Activated B cell treated with CpG ODN at 0.5 μM for 24 hours (primary cell): ENCODE measurements at regions of chr12 and their contacts with region 1.

Region 1: GRCh38 chr12:22443379-22444316 is 100.7 kb downstream of the C2CD5 start:
- DNase-seq: no peak
- ATAC-seq: peak; percentile 100
- H3K4me3 Mint-ChIP-seq: no peak overlapping the region
- H3K27ac Mint-ChIP-seq: no peak overlapping the region
- H3K4me1 Mint-ChIP-seq: no peaks in the 10 kb centered on the region
- H3K27me3 Mint-ChIP-seq: no peaks in the 10 kb centered on the region
- CTCF ChIP-seq: peak; percentile 37

Region 2: GRCh38 chr12:20463913-20464524 is 1979.6 kb before region 1 on chr12:
- CTCF ChIA-PET with region 1: no interaction called
- POLR2A ChIA-PET with region 1: no interaction called
- intact Hi-C with region 1: loop called (anchors 5 kb)
- DNase-seq: no peak
- ATAC-seq: no peak
- H3K4me3 Mint-ChIP-seq: no peak overlapping the region
- H3K27ac Mint-ChIP-seq: no peak overlapping the region
- H3K4me1 Mint-ChIP-seq: no peaks in the 10 kb centered on the region
- H3K27me3 Mint-ChIP-seq: no peaks in the 10 kb centered on the region
- CTCF ChIP-seq: no peak

Region 3: GRCh38 chr12:21697904-21698630 is 745.6 kb before region 1 on chr12:
- CTCF ChIA-PET with region 1: interaction called, 24 read pairs
- POLR2A ChIA-PET with region 1: no interaction called
- intact Hi-C with region 1: loop called (anchors 1 kb)
- DNase-seq: no peak
- ATAC-seq: no peak
- H3K4me3 Mint-ChIP-seq: no peak overlapping the region
- H3K27ac Mint-ChIP-seq: no peak overlapping the region
- H3K4me1 Mint-ChIP-seq: no peaks in the 10 kb centered on the region
- H3K27me3 Mint-ChIP-seq: peaks cover under 1% of the 10 kb centered on the region
- CTCF ChIP-seq: no peak

Region 4: DNA sequence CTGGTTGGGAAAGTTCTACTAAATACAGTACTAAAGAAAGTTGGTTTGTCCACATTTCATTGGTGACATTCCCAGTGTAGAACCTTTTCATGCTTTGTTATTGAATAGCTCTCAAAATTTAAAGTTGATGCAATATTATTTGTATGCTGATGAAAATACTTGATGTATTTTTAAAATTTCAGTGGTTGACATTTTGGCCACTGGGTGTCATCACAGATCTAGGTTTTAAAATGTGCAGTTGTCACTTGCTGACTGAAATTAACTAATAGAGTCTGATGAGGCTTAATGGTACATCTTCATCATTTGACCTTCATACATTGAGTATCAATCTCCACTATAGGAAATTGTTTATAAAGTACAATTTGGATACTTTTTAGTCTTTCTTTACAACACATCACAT is 360.5 kb before region 1 on chr12:
- CTCF ChIA-PET with region 1: interaction called, 16 read pairs
- POLR2A ChIA-PET with region 1: no interaction called
- intact Hi-C with region 1: loop called (anchors 1 kb)
- DNase-seq: no peak
- ATAC-seq: peak; percentile 37
- H3K4me3 Mint-ChIP-seq: no peak overlapping the region
- H3K27ac Mint-ChIP-seq: no peak overlapping the region
- H3K4me1 Mint-ChIP-seq: no peaks in the 10 kb centered on the region
- H3K27me3 Mint-ChIP-seq: no peaks in the 10 kb centered on the region
- CTCF ChIP-seq: no peak

Region 5: GRCh38 chr12:22100958-22101748 is 342.5 kb before region 1 on chr12:
- CTCF ChIA-PET with region 1: interaction called, 17 read pairs
- POLR2A ChIA-PET with region 1: no interaction called
- intact Hi-C with region 1: loop called (anchors 1 kb)
- DNase-seq: no peak
- ATAC-seq: peak; percentile 52
- H3K4me3 Mint-ChIP-seq: no peak overlapping the region
- H3K27ac Mint-ChIP-seq: no peak overlapping the region
- H3K4me1 Mint-ChIP-seq: peaks cover 11% of the 10 kb centered on the region
- H3K27me3 Mint-ChIP-seq: peaks cover 8% of the 10 kb centered on the region
- CTCF ChIP-seq: no peak

Region 6: DNA sequence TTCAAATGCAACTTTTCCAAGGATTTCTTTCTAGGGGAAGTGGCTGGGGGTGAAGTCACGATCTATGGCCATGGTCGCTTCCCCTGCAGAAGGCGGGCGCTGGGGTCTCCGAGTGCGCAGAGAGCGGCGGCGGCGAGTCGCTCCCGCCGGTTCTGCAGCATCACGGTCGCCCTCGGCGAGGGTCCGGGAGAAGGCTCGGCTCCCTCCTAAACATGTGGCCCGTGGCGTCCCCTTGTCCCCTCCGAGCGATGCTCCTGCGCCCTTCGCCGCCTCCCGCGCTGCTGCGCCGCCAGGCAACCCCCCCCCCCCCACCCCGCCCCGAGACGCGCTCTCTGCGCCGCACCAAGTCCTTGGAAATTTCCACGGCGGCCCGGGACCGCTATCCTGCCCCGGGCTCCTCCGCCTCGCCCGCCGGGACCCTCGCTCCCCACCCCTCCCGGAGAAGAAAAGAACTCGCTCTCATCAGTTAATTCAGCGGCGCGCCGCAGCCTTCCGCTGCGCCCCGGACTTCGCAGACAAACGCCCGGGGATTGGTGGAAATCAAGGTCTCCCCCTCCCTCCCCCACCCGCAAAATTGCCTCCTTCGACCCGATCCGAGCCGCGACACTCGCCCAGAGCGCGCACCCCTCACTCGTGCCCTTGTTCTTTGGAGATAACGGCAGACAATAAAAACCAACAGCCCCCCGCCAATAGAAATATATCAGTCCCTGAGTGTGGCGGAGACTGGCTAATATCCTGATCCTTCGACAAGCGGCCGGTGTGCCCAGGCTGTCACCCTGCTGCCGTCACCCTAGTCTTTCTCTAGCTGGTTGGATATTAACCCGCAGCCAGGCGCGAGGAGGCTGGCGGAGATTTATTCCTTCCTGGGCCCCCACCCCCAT is 109.0 kb before region 1 on chr12 and contains the start of gene ST8SIA1:
- CTCF ChIA-PET with region 1: no interaction called
- POLR2A ChIA-PET with region 1: no interaction called
- intact Hi-C with region 1: loop called (anchors 2 kb)
- DNase-seq: no peak
- ATAC-seq: peak; percentile 19
- H3K4me3 Mint-ChIP-seq: peak within 1 kb of the TSS; percentile 82
- H3K27ac Mint-ChIP-seq: no peak within 1 kb of the TSS
- H3K4me1 Mint-ChIP-seq: peaks cover 22% of the 10 kb centered on the region
- H3K27me3 Mint-ChIP-seq: peaks cover 58% of the 10 kb centered on the region
- CTCF ChIP-seq: no peak
- total RNA-seq, gene ST8SIA1: 0.31 TPM in 1 of 2 replicates, not detected in the other

Region 7: DNA sequence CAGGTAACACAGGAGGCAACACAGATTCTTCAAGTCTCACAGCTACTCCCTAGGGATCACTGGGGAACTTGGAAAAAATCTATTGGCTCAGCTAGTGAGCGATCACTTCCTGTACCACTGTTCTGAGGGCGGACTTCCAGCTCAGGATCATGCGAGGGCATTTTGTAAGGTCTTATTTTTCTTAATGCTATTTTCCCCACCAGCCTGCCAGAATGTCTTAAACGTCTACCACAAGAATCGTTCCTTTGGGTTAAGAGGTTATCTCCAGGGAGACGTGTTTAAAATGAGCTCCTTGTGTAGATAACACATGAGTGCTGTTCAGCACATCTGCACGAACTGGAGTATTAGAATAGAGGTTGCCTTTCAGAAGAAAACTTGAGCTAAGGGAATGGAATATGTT is 343.9 kb after region 1 on chr12:
- CTCF ChIA-PET with region 1: no interaction called
- POLR2A ChIA-PET with region 1: no interaction called
- intact Hi-C with region 1: no loop called
- DNase-seq: no peak
- ATAC-seq: no peak
- H3K4me3 Mint-ChIP-seq: no peak overlapping the region
- H3K27ac Mint-ChIP-seq: no peak overlapping the region
- H3K4me1 Mint-ChIP-seq: no peaks in the 10 kb centered on the region
- H3K27me3 Mint-ChIP-seq: peaks cover 4% of the 10 kb centered on the region
- CTCF ChIP-seq: no peak